ENCODE measurements at regions of chr5 and their contacts with region 1.

Region 1: GRCh38 chr5:53095931-53096525 is 13.5 kb downstream of the MOCS2 start:
- DNase-seq: peak; percentile 42
- ATAC-seq: peak; percentile 69
- H3K4me3 Mint-ChIP-seq: no peak overlapping the region
- H3K27ac Mint-ChIP-seq: no peak overlapping the region
- H3K4me1 Mint-ChIP-seq: peaks cover 10% of the 10 kb centered on the region
- H3K27me3 Mint-ChIP-seq: no peaks in the 10 kb centered on the region

Region 2: GRCh38 chr5:53109443-53110127 is 13.6 kb after region 1 on chr5 and contains the start of gene MOCS2:
- POLR2A ChIA-PET with region 1: interaction called, 11 read pairs
- DNase-seq: peak; percentile 94
- ATAC-seq: peak; percentile 99
- H3K4me3 Mint-ChIP-seq: peak within 1 kb of the TSS; percentile 86
- H3K27ac Mint-ChIP-seq: peak within 1 kb of the TSS; percentile 89
- H3K4me1 Mint-ChIP-seq: peaks cover 30% of the 10 kb centered on the region
- H3K27me3 Mint-ChIP-seq: no peaks in the 10 kb centered on the region
- total RNA-seq, gene MOCS2: 23.1 to 26.0 TPM